ENCODE measurements at regions of chr2 and their contacts with region 1.

Region 1: DNA sequence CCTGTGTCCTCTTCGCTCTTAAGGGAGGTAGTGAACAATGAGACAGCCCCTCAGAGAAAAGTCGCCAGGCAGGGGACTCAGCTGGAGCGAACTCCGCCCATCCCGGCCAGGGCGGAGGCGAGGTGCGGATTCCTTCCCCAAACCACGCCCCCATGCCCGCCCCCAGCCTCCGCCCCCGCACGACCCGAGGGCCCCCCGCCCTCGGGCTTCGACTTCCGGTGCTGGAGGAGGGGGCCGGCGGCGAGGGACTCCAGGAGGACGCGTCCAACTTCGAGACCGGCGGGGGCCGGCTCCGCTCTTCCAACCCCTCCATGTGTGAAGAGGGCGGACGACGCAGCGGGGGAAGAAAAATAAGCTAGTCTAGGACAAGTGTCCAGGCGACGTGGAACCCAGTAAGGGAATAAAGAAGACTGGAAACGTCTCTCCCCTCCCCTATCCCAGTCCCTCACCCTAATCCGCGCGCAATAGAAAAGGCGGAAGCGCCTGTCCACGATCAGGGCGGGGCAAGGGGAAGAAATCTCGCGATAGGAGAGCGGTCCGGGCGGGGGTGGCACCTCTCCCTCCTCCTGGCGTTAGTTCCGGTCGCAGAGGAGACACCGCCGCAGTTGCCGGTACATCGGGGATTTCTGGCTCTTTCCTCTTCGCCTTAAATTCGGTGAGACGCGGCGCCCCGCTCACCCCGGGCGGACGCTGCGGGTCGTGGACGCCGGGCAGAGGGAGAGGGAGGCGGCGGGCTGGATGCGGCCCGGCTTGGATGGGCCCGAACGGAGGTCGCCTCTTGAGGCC is at the start of gene BZW1:
- DNase-seq: peak; percentile 97 to 98 (median 98)
- ATAC-seq: peak; percentile 92
- H3K4me3 ChIP-seq: peak within 1 kb of the TSS; percentile 99
- H3K4me1 ChIP-seq: peaks cover 18% of the 10 kb centered on the region
- CTCF ChIP-seq: no peak
- total RNA-seq, gene BZW1: 137 to 235 (median 174) TPM

Region 2: DNA sequence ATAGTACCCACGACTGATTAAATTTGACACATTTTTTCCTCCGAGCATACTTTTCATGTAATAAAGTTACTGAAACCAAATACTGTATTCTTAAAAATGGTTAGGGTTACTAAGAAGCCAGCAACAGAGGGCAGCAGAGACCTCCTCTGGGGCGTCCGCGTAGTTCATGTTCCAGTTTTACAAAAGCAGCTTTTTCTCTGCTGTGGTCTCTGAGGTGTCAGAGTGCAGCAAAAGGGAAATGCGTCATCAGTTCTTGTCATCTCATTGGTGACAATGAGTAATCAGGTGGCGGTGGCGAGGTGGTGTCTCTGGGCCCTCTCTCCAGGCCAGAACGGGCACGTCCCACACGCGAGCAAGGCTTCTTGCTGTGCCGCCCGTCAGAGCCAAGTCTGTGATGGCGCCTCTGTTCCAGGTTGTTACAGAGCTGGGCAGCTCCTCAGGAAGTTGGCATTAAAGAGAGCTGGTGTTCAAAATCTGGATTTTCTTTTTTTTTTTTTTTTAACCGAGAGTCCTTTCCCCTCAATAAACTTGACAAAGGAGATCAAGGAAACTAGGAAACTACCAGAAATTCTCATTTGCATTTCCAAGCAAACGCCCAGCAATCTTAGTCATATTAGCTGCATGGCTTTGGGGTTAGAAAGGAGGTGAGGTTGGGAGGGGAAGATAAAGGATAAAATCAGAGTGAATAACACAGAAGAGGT is 98.4 kb before region 1 on chr2:
- intact Hi-C with region 1: loop called in 1 of 2 experiments (anchors 10 kb)
- DNase-seq: peak; percentile 86 to 92 (median 89)
- ATAC-seq: peak; percentile 99
- H3K4me3 ChIP-seq: no peak overlapping the region
- H3K4me1 ChIP-seq: peaks cover 4% of the 10 kb centered on the region
- CTCF ChIP-seq: peak; percentile 44

Region 3: GRCh38 chr2:201135411-201135810 is 323.9 kb after region 1 on chr2:
- intact Hi-C with region 1: no loop called
- DNase-seq: no peak
- ATAC-seq: no peak
- H3K4me3 ChIP-seq: no peak overlapping the region
- H3K4me1 ChIP-seq: peaks cover 5% of the 10 kb centered on the region
- CTCF ChIP-seq: no peak

Region 4: GRCh38 chr2:201839727-201840126 is 1028.2 kb after region 1 on chr2:
- intact Hi-C with region 1: no loop called
- DNase-seq: no peak
- ATAC-seq: no peak
- H3K4me3 ChIP-seq: no peak overlapping the region
- H3K4me1 ChIP-seq: no peaks in the 10 kb centered on the region
- CTCF ChIP-seq: no peak

Measured in mucosa of descending colon (tissue), 3 donors.